HepG2 (cell line): ENCODE measurements at regions of chr3 and their contacts with region 1.

Region 1: GRCh38 chr3:81572201-81572756 is 189.2 kb downstream of the GBE1 start:
- DNase-seq: no peak
- ATAC-seq: no peak
- H3K4me3 ChIP-seq: no peak overlapping the region
- H3K27ac ChIP-seq: no peak overlapping the region
- H3K4me1 ChIP-seq: no peaks in the 10 kb centered on the region
- H3K27me3 ChIP-seq: no peaks in the 10 kb centered on the region
- CTCF ChIP-seq: no peak
- EP300 ChIP-seq: no peak
- POLR2A ChIP-seq: no peak
- RAD21 ChIP-seq: no peak

Region 2: DNA sequence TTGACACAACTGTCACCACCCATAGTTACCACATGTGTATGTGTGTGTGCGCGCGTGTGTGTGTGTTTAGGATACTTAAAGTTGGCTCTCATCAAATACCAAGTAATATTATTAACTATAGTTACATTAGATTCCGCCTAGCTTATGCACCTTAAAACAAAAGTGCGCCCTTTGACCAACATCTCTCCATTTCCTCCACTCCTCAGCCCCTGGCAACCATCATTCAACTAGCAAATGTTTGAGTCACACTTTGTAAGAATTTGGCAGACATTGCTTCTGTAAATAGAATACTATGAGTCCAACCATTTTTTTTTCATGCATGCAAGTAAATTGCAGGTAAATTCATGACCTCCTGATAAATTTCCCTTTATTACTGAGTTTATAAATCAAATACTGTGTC is 19.8 kb after region 1 on chr3:
- CTCF ChIA-PET with region 1: no interaction called
- POLR2A ChIA-PET with region 1: no interaction called
- in situ Hi-C with region 1: no loop called
- intact Hi-C with region 1: loop called (anchors 1 kb)
- DNase-seq: no peak
- ATAC-seq: no peak
- H3K4me3 ChIP-seq: no peak overlapping the region
- H3K27ac ChIP-seq: no peak overlapping the region
- H3K4me1 ChIP-seq: no peaks in the 10 kb centered on the region
- H3K27me3 ChIP-seq: no peaks in the 10 kb centered on the region
- CTCF ChIP-seq: no peak
- EP300 ChIP-seq: no peak
- POLR2A ChIP-seq: no peak
- RAD21 ChIP-seq: no peak

Region 3: GRCh38 chr3:81622395-81622794 is 50.1 kb after region 1 on chr3:
- CTCF ChIA-PET with region 1: no interaction called
- POLR2A ChIA-PET with region 1: no interaction called
- in situ Hi-C with region 1: no loop called
- intact Hi-C with region 1: no loop called
- DNase-seq: no peak
- ATAC-seq: no peak
- H3K4me3 ChIP-seq: no peak overlapping the region
- H3K27ac ChIP-seq: no peak overlapping the region
- H3K4me1 ChIP-seq: no peaks in the 10 kb centered on the region
- H3K27me3 ChIP-seq: no peaks in the 10 kb centered on the region; a peak in 1 of 5 replicates
- CTCF ChIP-seq: no peak
- EP300 ChIP-seq: no peak
- POLR2A ChIP-seq: no peak
- RAD21 ChIP-seq: no peak

Region 4: DNA sequence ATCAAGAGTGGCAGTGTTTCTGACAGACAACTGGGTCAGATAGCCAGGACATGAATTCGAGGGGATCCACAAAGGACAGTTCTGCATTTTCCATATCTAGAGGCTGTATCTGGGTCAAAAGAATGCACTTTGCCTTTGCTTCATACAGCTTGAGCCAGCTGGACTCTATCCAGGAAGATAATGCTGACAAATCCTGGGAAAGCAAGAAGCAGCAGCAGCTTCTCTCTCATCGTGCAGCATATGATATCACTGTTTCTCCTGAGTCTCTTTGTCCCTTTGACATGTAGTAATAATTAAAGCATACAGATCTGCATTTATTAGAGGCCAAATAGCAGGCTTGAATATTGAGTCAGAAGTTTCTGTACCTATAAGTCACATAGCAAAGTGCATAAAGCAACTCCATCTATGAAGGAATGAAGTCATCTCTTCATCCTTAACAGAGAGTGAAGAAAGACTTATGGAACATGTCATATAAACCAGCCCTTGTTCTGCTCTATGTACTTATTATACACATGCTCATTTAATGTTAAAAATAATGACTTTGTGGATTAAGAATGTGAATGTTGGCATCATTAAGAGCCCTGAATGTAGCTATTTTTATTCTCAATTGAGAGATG is 426.0 kb after region 1 on chr3:
- CTCF ChIA-PET with region 1: no interaction called
- POLR2A ChIA-PET with region 1: no interaction called
- in situ Hi-C with region 1: no loop called
- intact Hi-C with region 1: no loop called
- DNase-seq: no peak
- ATAC-seq: no peak
- H3K4me3 ChIP-seq: no peak overlapping the region
- H3K27ac ChIP-seq: no peak overlapping the region
- H3K4me1 ChIP-seq: no peaks in the 10 kb centered on the region
- H3K27me3 ChIP-seq: no peaks in the 10 kb centered on the region
- CTCF ChIP-seq: no peak
- EP300 ChIP-seq: no peak
- POLR2A ChIP-seq: no peak
- RAD21 ChIP-seq: no peak

Region 5: DNA sequence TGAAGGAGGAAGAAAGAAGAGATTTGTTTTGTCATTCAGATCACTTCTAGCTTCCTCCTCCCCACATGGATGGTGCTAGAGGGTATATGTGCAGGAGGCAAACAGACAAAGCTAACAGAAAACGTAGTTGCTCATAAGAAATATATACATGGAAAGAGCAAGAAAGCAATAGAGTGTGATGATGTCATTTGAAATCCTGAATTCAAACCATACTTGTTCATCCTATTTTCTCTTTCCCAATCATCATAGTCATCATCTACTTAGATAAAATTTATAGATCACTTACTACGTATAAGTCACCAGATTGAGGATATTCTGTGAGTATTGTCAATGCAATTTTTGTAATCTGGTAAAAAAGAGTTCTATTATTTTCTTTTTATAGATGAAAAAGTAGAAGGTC is 690.6 kb after region 1 on chr3:
- CTCF ChIA-PET with region 1: no interaction called
- POLR2A ChIA-PET with region 1: no interaction called
- in situ Hi-C with region 1: no loop called
- intact Hi-C with region 1: no loop called
- DNase-seq: no peak
- ATAC-seq: no peak
- H3K4me3 ChIP-seq: no peak overlapping the region
- H3K27ac ChIP-seq: no peak overlapping the region
- H3K4me1 ChIP-seq: peaks cover 28% of the 10 kb centered on the region
- H3K27me3 ChIP-seq: no peaks in the 10 kb centered on the region
- CTCF ChIP-seq: no peak
- EP300 ChIP-seq: no peak
- POLR2A ChIP-seq: no peak
- RAD21 ChIP-seq: no peak